ENCODE measurements at regions of chr1 and their contacts with region 1.

Region 1: GRCh38 chr1:206734499-206735142 is 36.0 kb upstream of the IL19 start:
- DNase-seq: peak; percentile 46 to 89 (median 75)
- ATAC-seq: peak; percentile 60 to 78 (median 69)
- H3K4me3 ChIP-seq: no peak overlapping the region
- H3K4me3 Mint-ChIP-seq: peak overlapping the region in 1 of 3 donors; percentile 21
- H3K27ac ChIP-seq: peak overlapping the region; percentile 89
- H3K27ac Mint-ChIP-seq: peak overlapping the region; percentile 66 to 91
- H3K4me1 ChIP-seq: peaks cover 41 to 56% of the 10 kb centered on the region in 2 experiments
- H3K4me1 Mint-ChIP-seq: peaks cover 56 to 62% (median 57%) of the 10 kb centered on the region in 3 donors
- H3K27me3 ChIP-seq: no peaks in the 10 kb centered on the region
- H3K27me3 Mint-ChIP-seq: no peaks in the 10 kb centered on the region

Region 2: GRCh38 chr1:206761159-206761768 is 26.6 kb after region 1 on chr1:
- CTCF ChIA-PET with region 1: interaction called, 3 to 16 read pairs
- POLR2A ChIA-PET with region 1: interaction called, 3 to 4 read pairs
- DNase-seq: no peak
- ATAC-seq: no peak
- H3K4me3 ChIP-seq: no peak overlapping the region
- H3K4me3 Mint-ChIP-seq: no peak overlapping the region
- H3K27ac ChIP-seq: no peak overlapping the region
- H3K27ac Mint-ChIP-seq: no peak overlapping the region
- H3K4me1 ChIP-seq: peaks cover 33 to 44% of the 10 kb centered on the region in 2 experiments
- H3K4me1 Mint-ChIP-seq: peaks cover 39 to 45% (median 42%) of the 10 kb centered on the region in 3 donors
- H3K27me3 ChIP-seq: no peaks in the 10 kb centered on the region
- H3K27me3 Mint-ChIP-seq: no peaks in the 10 kb centered on the region

Region 3: DNA sequence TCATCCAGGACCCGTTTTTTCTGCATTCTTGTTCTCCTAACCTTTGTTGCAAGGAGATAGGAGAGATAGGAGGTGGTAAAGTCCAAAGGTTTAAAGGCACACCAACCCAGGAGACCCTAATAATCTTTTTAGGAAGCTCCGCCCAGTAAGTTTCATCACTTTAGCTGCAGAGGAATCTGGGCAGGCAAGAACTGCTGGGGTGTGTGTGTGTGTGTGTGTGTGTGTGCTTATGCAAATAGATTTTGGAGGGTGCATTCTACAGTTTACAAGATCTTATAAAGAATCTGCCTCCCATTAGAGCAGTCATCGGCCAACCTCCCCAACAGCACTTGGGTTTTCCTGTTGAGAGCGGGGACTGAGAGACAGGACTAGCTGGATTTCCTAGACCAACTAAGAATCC is 41.6 kb after region 1 on chr1:
- CTCF ChIA-PET with region 1: interaction called in 1 of 2 experiments, 5 read pairs
- POLR2A ChIA-PET with region 1: interaction called, 4 to 11 read pairs
- DNase-seq: no peak
- ATAC-seq: no peak
- H3K4me3 ChIP-seq: no peak overlapping the region
- H3K4me3 Mint-ChIP-seq: no peak overlapping the region
- H3K27ac ChIP-seq: no peak overlapping the region
- H3K27ac Mint-ChIP-seq: no peak overlapping the region
- H3K4me1 ChIP-seq: peaks cover 16 to 26% of the 10 kb centered on the region in 2 experiments
- H3K4me1 Mint-ChIP-seq: peaks cover 26 to 30% (median 28%) of the 10 kb centered on the region in 3 donors
- H3K27me3 ChIP-seq: peaks cover 0 to 8% of the 10 kb centered on the region in 2 experiments
- H3K27me3 Mint-ChIP-seq: no peaks in the 10 kb centered on the region

Region 4: GRCh38 chr1:206925106-206925736 is 190.6 kb after region 1 on chr1:
- CTCF ChIA-PET with region 1: interaction called, 10 to 17 read pairs
- POLR2A ChIA-PET with region 1: no interaction called
- DNase-seq: peak in 33 of 35 experiments; percentile 40 to 81 (median 57)
- ATAC-seq: peak; percentile 16 to 36 (median 22)
- H3K4me3 ChIP-seq: no peak overlapping the region
- H3K4me3 Mint-ChIP-seq: no peak overlapping the region
- H3K27ac ChIP-seq: peak overlapping the region; percentile 89
- H3K27ac Mint-ChIP-seq: no peak overlapping the region
- H3K4me1 ChIP-seq: peaks cover 30 to 59% of the 10 kb centered on the region in 2 experiments
- H3K4me1 Mint-ChIP-seq: peaks cover 30 to 35% (median 32%) of the 10 kb centered on the region in 3 donors
- H3K27me3 ChIP-seq: no peaks in the 10 kb centered on the region
- H3K27me3 Mint-ChIP-seq: no peaks in the 10 kb centered on the region

Region 5: GRCh38 chr1:206935491-206936067 is 201.0 kb after region 1 on chr1:
- CTCF ChIA-PET with region 1: interaction called in 1 of 2 experiments, 10 read pairs
- POLR2A ChIA-PET with region 1: no interaction called
- DNase-seq: peak in 17 of 35 experiments; percentile 20 to 59 (median 38)
- ATAC-seq: peak in 2 of 4 experiments; percentile 50 to 72
- H3K4me3 ChIP-seq: no peak overlapping the region
- H3K4me3 Mint-ChIP-seq: no peak overlapping the region
- H3K27ac ChIP-seq: no peak overlapping the region
- H3K27ac Mint-ChIP-seq: no peak overlapping the region
- H3K4me1 ChIP-seq: peaks cover 2 to 27% of the 10 kb centered on the region in 2 experiments
- H3K4me1 Mint-ChIP-seq: peaks cover 26 to 31% (median 29%) of the 10 kb centered on the region in 3 donors
- H3K27me3 ChIP-seq: no peaks in the 10 kb centered on the region
- H3K27me3 Mint-ChIP-seq: no peaks in the 10 kb centered on the region